Thyroid gland (tissue), 4 donors: ENCODE measurements at regions of chr6 and their contacts with region 1.

Region 1: DNA sequence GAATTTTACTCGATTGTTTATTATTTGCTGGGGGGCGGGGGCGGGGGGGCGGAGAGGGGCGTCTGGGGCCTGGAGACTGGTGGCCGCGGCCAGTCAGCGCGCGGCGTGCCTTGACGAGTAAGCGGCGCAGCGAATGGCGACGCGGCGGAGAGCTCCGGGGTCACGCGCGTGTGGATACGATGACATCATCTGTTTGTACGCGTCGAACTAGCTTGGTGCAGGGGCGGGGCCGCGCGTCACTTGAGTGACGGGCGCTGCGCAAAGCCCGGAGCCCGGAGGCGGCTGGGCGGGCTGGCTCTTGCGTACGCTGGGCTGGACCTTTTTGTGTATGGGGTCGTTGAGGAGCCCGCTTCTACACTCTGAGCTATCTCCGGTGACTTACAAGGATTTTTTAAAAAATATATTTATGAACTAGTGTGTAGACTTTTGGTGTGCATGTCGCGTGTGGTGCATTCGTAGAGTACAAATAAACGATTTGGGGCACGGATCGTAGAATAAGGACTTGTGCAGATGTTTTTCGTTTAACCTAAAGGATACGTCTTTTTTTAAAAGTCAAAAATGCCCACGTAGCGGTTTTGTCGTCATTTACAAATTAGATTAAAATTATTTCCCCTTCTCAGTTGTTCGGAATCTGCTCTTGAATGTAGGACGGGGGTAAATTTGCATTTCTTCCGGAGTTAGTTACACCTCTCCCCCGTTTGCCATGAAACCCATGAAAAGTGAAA is 2.2 kb upstream of the FOXO3 start:
- DNase-seq: peak; percentile 98 to 99
- H3K4me3 ChIP-seq: peak overlapping the region; percentile 92 to 96 (median 96)
- H3K27ac ChIP-seq: peak overlapping the region; percentile 98 to 100 (median 99)
- H3K4me1 ChIP-seq: peaks cover 17 to 20% of the 10 kb centered on the region in 2 donors
- H3K27me3 ChIP-seq: no peaks in the 10 kb centered on the region
- CTCF ChIP-seq: no peak
- POLR2A ChIP-seq: peak; percentile 30 to 90

Region 2: GRCh38 chr6:108661430-108661829 is 102.9 kb after region 1 on chr6:
- intact Hi-C with region 1: loop called (anchors 10 kb)
- DNase-seq: no peak
- H3K4me3 ChIP-seq: no peak overlapping the region
- H3K27ac ChIP-seq: no peak overlapping the region
- H3K4me1 ChIP-seq: peaks cover 0 to 20% of the 10 kb centered on the region in 2 donors
- H3K27me3 ChIP-seq: no peaks in the 10 kb centered on the region
- CTCF ChIP-seq: no peak
- POLR2A ChIP-seq: no peak

Region 3: DNA sequence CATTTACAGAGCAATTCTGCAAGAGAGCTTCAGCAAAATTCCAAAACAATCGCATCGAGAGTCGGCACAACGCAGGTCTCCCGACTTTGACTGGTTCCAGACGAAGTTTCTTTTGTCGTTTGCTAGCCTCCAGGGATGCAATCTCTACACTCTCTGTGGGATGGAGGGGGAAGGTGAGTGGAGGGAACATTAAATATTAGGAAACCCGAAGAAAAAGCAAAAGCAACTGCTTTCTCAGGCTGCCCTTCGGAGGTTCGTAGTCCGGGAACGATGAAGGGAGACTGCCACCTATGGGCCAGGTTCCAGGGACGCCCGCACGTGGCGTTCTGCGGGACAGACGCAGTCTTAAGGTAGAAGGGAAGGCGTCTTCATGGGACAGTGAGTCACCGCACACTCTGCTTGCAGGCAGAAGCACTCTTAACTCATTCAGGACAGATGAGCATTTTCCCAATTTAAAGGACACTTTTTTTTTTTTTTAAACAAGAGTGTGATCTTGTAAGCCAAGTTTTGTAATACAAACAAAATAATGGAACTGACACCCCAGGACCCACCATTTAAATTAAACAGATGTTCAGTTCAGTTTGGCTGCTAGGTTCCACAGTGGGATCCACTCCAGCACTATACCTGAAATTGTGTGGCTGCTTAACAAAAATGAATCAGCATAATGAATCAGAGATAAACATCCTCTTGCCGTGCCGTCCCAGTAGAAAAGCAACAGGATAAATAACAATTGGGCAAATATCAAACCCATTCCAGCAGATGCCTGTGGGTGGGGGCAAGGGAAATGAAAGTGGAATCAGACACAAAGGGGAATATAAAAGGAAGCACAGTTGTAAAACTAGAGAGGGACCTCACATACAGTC is 223.9 kb after region 1 on chr6:
- intact Hi-C with region 1: loop called (anchors 5 kb)
- DNase-seq: peak; percentile 82 to 88
- H3K4me3 ChIP-seq: peak overlapping the region; percentile 19 to 57 (median 30)
- H3K27ac ChIP-seq: peak overlapping the region in 1 of 3 donors; percentile 49
- H3K4me1 ChIP-seq: peaks cover 0 to 5% of the 10 kb centered on the region in 2 donors
- H3K27me3 ChIP-seq: no peaks in the 10 kb centered on the region
- CTCF ChIP-seq: peak; percentile 49 to 83 (median 72)
- POLR2A ChIP-seq: no peak

Region 4: GRCh38 chr6:108835218-108835850 is 276.8 kb after region 1 on chr6:
- intact Hi-C with region 1: loop called (anchors 5 kb)
- DNase-seq: peak; percentile 88 to 89
- H3K4me3 ChIP-seq: no peak overlapping the region
- H3K27ac ChIP-seq: no peak overlapping the region
- H3K4me1 ChIP-seq: peaks cover 5 to 14% of the 10 kb centered on the region in 2 donors
- H3K27me3 ChIP-seq: no peaks in the 10 kb centered on the region
- CTCF ChIP-seq: peak; percentile 77 to 97 (median 93)
- POLR2A ChIP-seq: no peak

Region 5: GRCh38 chr6:109095027-109095834 is 536.7 kb after region 1 on chr6 and contains the start of gene CEP57L1:
- intact Hi-C with region 1: loop called (anchors 10 kb)
- DNase-seq: peak; percentile 98 to 99
- H3K4me3 ChIP-seq: peak within 1 kb of the TSS; percentile 50 to 80 (median 64)
- H3K27ac ChIP-seq: peak within 1 kb of the TSS; percentile 80 to 99 (median 98)
- H3K4me1 ChIP-seq: peaks cover 17 to 20% of the 10 kb centered on the region in 2 donors
- H3K27me3 ChIP-seq: no peaks in the 10 kb centered on the region
- CTCF ChIP-seq: peak in 1 of 6 experiments; percentile 19
- POLR2A ChIP-seq: peak; percentile 47 to 53
- total RNA-seq, gene CEP57L1: 15.0 to 27.7 (median 19.5) TPM